Activated CD4-positive, alpha-beta memory T cell treated with anti-CD3 and anti-CD28 coated beads, Interleukin-2, amount 10 ng/mL, durations not matched to agents 7 days and 5 days (primary cell): ENCODE measurements at regions of chr21 and their contacts with region 1.

Region 1: DNA sequence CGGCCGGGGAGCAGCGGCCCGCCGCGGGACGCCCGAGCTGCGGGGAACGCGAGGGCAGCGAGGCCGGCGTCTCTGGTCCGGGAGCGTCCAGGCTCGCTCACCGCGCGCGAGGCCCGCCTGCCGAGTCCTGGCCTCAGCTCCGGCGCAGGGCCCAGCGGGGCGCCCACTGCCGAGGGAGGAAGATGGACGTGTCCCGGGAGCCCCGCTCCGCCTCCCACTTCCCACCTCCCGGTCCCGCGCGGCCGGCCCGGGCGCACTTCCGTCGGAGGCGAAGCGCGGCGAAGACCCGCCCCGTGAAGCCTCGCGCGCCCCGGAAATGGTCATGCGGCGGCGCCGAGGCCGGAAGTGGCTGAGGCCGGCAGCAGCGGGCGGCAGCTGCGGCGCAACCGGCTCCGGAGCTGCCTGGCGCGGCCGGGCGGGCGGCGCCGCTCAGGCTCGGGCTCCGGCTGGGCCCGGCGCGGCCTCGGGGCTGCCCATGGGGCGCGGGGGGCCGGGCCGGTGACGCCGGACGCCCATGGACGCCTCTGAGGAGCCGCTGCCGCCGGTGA is at the start of gene TRAPPC10:
- DNase-seq: peak; percentile 86
- H3K4me3 Mint-ChIP-seq: peak within 1 kb of the TSS; percentile 96
- H3K27ac Mint-ChIP-seq: peak within 1 kb of the TSS; percentile 95
- H3K4me1 Mint-ChIP-seq: peaks cover 46% of the 10 kb centered on the region
- H3K27me3 Mint-ChIP-seq: no peaks in the 10 kb centered on the region
- total RNA-seq, gene TRAPPC10: 76.0 to 76.5 TPM

Region 2: DNA sequence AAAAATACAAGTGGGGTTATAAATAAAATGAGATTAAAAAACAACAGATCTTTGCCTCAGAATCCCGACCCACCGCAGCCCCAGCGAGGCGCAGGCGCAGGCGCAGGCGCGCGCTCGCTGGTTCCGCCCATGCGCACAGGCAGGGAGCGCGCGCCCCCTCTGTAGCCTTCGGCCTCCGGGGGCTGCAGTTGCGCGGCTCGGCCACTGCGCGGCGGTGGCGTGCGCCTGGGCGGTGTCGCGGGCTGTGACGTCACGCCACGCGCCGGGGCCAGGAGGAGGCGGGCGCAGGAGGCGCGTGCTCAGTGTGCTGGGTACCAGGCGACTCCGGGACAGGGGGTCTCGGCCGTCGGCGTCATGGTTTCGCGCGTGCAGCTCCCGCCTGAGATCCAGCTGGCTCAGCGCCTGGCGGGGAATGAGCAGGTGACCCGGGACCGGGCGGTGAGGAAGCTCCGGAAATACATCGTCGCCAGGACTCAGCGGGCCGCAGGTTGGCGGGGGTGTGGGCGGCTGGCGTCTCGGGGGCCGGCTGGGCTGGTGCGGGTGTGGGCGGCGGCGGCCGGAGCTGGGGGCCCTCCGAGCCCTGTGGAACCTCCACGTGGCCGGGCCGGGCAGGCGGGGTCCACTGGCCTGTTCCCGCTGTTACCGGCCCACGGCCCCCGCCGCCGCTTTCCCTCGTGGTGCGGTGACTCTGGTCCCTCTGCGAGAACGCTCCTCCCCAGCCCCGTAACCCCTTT is 222.6 kb before region 1 on chr21 and contains the start of gene RRP1:
- CTCF ChIA-PET with region 1: no interaction called
- POLR2A ChIA-PET with region 1: interaction called, 10 read pairs
- DNase-seq: peak; percentile 94
- H3K4me3 Mint-ChIP-seq: peak within 1 kb of the TSS; percentile 91
- H3K27ac Mint-ChIP-seq: peak within 1 kb of the TSS; percentile 80
- H3K4me1 Mint-ChIP-seq: peaks cover 24% of the 10 kb centered on the region
- H3K27me3 Mint-ChIP-seq: no peaks in the 10 kb centered on the region
- total RNA-seq, gene RRP1: 22.4 to 22.6 TPM

Region 3: GRCh38 chr21:43884012-43884860 is 127.8 kb before region 1 on chr21:
- CTCF ChIA-PET with region 1: no interaction called
- POLR2A ChIA-PET with region 1: no interaction called
- DNase-seq: peak; percentile 39
- H3K4me3 Mint-ChIP-seq: no peak overlapping the region
- H3K27ac Mint-ChIP-seq: peak overlapping the region; percentile 26
- H3K4me1 Mint-ChIP-seq: peaks cover 57% of the 10 kb centered on the region
- H3K27me3 Mint-ChIP-seq: no peaks in the 10 kb centered on the region

Region 4: GRCh38 chr21:43956670-43957035 is 55.4 kb before region 1 on chr21:
- CTCF ChIA-PET with region 1: no interaction called
- POLR2A ChIA-PET with region 1: no interaction called
- DNase-seq: no peak
- H3K4me3 Mint-ChIP-seq: no peak overlapping the region
- H3K27ac Mint-ChIP-seq: no peak overlapping the region
- H3K4me1 Mint-ChIP-seq: peaks cover 3% of the 10 kb centered on the region
- H3K27me3 Mint-ChIP-seq: no peaks in the 10 kb centered on the region

Region 5: DNA sequence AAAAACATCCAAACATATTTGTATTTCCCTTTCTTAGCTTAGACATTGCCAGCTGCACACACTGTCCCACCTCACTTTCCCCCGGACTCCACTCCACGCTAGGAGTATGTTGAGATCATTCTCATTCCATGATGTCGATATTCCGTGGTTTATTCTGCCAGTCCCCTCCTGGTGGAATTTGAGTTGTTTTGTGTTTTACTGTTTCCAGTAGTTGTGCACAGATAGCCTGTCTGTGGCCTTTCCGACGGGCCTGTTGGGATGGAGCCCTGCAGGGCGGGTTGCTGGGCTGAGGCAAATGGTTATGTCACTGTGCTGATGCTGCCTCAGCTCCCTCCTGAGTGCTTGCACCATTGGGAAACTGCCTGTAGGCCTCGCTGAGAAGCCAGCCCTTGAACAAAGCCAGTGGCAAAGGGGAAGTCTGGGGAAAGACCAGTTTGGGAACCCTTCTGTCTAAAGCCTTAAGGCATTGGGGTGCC is 12.9 kb after region 1 on chr21:
- CTCF ChIA-PET with region 1: interaction called, 4 read pairs
- POLR2A ChIA-PET with region 1: interaction called, 16 read pairs
- DNase-seq: no peak
- H3K4me3 Mint-ChIP-seq: no peak overlapping the region
- H3K27ac Mint-ChIP-seq: no peak overlapping the region
- H3K4me1 Mint-ChIP-seq: peaks cover 65% of the 10 kb centered on the region
- H3K27me3 Mint-ChIP-seq: no peaks in the 10 kb centered on the region

Region 6: GRCh38 chr21:44065428-44065827 is 53.4 kb after region 1 on chr21:
- CTCF ChIA-PET with region 1: interaction called, 4 read pairs
- POLR2A ChIA-PET with region 1: interaction called, 16 read pairs
- DNase-seq: peak; percentile 81
- H3K4me3 Mint-ChIP-seq: peak overlapping the region; percentile 57
- H3K27ac Mint-ChIP-seq: peak overlapping the region; percentile 91
- H3K4me1 Mint-ChIP-seq: peaks cover 44% of the 10 kb centered on the region
- H3K27me3 Mint-ChIP-seq: no peaks in the 10 kb centered on the region

Region 7: DNA sequence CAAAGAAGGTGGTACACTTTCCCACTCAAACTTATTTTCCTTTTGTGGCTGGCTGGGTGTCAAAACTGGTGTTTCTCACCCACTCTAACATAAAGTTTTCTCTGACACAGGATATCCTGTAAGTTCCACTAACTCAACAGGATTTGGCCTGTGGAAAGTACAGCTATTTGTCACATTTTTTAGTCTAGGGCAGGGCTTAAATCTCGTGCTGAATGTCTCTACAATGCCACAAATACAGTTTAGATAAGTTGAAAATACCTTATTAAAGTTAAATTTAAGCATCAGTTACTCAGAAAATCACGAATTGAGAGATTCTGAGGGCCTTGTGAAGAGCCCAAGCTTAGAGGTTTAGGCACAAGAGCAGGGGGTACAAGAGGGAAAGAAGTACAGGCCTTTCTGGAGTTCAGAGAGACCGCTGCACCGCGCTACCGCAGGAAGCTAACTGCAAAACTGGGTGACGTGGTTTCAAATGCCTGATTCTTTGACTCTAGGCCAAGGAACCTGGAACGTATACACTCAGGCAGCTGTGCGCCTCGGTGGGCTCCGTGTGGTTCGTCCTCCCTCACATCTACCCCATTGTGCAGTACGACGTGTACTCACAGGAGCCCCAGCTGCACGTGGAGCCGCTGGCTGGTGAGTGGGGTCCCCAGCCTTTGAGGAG is 71.7 kb after region 1 on chr21:
- CTCF ChIA-PET with region 1: interaction called, 7 read pairs
- POLR2A ChIA-PET with region 1: interaction called, 71 read pairs
- DNase-seq: peak; percentile 79
- H3K4me3 Mint-ChIP-seq: peak overlapping the region; percentile 76
- H3K27ac Mint-ChIP-seq: peak overlapping the region; percentile 99
- H3K4me1 Mint-ChIP-seq: peaks cover 96% of the 10 kb centered on the region
- H3K27me3 Mint-ChIP-seq: no peaks in the 10 kb centered on the region

Region 8: GRCh38 chr21:44089001-44089911 is 77.2 kb after region 1 on chr21:
- CTCF ChIA-PET with region 1: interaction called, 7 read pairs
- POLR2A ChIA-PET with region 1: interaction called, 71 read pairs
- DNase-seq: peak; percentile 65
- H3K4me3 Mint-ChIP-seq: peak overlapping the region; percentile 25
- H3K27ac Mint-ChIP-seq: peak overlapping the region; percentile 99
- H3K4me1 Mint-ChIP-seq: peaks cover 68% of the 10 kb centered on the region
- H3K27me3 Mint-ChIP-seq: no peaks in the 10 kb centered on the region

Region 9: GRCh38 chr21:44723177-44724131 is 711.4 kb after region 1 on chr21:
- CTCF ChIA-PET with region 1: no interaction called
- POLR2A ChIA-PET with region 1: no interaction called
- DNase-seq: no peak
- H3K4me3 Mint-ChIP-seq: no peak overlapping the region
- H3K27ac Mint-ChIP-seq: no peak overlapping the region
- H3K4me1 Mint-ChIP-seq: no peaks in the 10 kb centered on the region
- H3K27me3 Mint-ChIP-seq: peaks cover 53% of the 10 kb centered on the region